ENCODE measurements at regions of chr1 and their contacts with region 1.

Region 1: DNA sequence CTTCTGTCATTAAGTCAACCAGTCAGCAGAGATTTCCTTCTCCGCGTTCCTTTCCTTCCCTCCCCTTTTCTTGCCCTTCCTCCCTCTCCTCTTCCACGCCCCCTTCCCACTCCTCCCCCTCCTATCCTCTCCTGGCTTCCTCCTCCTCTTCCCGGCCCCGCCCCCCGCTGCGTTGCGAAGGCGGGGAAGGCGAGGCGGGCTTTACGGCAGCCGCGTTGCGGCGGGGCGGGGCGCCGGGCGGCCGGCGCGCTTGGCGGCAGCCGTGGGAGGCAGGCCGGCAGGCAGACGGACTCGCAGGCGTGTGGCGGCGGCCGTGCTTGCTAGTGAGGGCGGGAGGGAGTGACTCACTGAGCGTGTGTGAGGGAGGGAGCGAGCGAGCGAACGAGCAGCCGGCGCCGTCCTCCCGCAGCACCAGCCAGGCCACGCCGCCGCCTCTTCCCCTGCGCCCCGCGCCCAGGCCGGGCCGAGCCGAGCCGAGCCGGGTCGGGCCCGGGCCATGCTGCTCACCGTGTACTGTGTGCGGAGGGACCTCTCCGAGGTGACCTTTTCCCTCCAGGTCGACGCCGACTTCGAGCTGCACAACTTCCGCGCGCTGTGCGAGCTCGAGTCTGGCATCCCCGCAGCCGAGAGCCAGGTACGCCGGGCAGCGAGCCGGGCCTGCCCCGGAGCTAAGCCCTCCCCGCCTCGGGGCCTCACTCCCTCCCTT is at the start of gene DDI2:
- DNase-seq: peak; percentile 97
- H3K4me3 ChIP-seq: peak within 1 kb of the TSS; percentile 83 to 95
- H3K27ac ChIP-seq: peak within 1 kb of the TSS; percentile 96 to 97
- H3K4me1 ChIP-seq: peaks cover 7% of the 10 kb centered on the region
- H3K27me3 ChIP-seq: no peaks in the 10 kb centered on the region
- CTCF ChIP-seq: peak in 2 of 4 experiments; percentile 7 to 22
- POLR2A ChIP-seq: peak; percentile 96
- total RNA-seq, gene DDI2: 47.5 to 58.4 TPM

Region 2: DNA sequence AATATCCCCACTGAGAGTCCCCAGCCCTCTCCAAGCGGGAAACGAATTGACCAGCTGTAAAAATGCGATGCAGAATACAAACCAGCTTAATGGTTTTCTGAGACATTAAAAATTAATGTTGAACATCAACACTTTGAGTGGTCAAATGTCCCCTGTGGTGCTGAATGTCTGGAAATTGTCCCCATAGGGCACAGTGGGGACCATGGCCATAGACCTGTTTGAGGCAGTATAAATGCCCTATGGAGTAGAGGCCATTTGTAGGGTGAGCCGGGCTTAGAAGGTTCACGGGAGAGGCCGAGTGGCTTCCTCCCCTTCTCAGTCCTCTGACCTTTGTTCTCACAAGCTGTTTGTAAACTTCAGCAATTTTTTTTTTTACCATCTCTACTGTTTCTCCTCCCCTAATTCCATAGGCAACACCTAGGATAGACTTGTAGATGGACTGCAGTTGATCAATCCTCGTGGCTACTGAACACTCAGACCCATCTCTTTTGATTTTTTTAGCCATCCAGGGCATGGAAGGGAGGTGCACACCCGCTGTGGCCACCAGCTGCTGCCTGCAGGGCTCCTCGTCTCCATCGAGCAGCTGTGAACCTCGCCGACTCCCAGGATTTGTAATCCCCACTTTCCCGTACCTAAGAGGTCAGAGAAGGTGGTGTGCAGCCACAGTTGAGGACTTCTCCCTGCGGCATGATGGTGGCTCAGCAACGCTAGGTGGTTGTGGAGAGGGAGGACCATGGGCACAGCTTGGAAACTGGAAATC is 977.9 kb before region 1 on chr1:
- intact Hi-C with region 1: no loop called
- DNase-seq: no peak
- H3K4me3 ChIP-seq: no peak overlapping the region
- H3K27ac ChIP-seq: no peak overlapping the region
- H3K4me1 ChIP-seq: no peaks in the 10 kb centered on the region
- H3K27me3 ChIP-seq: no peaks in the 10 kb centered on the region
- CTCF ChIP-seq: no peak
- POLR2A ChIP-seq: no peak

Region 3: DNA sequence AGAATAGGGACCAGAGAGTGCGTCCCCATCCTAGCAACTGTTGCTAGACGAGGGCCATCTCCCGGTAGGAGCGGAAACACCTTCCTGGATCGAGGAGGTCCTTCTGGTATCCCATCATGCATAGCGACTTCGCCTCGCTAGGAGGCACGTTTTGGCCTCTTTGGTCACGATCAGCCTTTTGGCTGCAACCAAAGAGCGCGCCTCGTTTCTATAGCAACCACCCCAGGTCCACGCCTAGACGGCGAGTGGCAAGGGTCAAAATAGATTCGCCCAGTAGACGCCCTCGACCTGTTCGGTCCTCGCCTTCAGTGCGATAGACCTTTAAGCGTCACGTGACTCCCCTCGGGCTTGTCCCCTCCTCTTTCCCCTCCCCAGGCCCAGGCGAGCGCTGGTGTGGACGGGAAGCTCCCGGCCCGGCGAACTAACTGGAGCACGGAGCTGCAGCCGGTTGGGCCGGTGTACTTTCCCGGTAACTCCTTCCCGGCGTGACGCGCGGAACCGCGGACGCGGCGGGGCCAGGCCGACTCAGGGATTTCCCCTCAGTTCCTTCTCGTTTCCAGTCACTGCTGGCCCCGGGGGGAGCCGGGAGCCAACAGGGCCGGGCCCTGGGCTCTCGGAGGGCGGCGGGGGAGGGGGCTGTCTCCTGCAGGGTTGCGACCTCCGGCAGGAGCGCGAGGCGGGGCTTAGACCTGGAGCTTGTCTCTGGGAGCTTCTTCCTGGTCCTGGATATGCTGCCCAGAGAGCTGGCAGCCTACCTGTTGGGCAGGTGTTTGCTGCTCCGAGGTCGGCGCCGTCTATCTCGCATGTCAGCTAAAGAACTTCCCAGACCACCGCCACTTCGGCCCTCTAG is 90.6 kb before region 1 on chr1 and contains the start of gene DNAJC16:
- intact Hi-C with region 1: loop called (anchors 1 kb)
- DNase-seq: peak; percentile 100
- H3K4me3 ChIP-seq: peak within 1 kb of the TSS; percentile 66 to 97
- H3K27ac ChIP-seq: peak within 1 kb of the TSS; percentile 98 to 99
- H3K4me1 ChIP-seq: no peaks in the 10 kb centered on the region
- H3K27me3 ChIP-seq: no peaks in the 10 kb centered on the region
- CTCF ChIP-seq: peak in 3 of 4 experiments; percentile 6 to 75 (median 46)
- POLR2A ChIP-seq: peak; percentile 78
- total RNA-seq, gene DNAJC16: 21.5 to 27.2 TPM

Region 4: GRCh38 chr1:15703562-15703961 is 86.2 kb after region 1 on chr1:
- intact Hi-C with region 1: loop called (anchors 5 kb)
- DNase-seq: peak; percentile 49
- H3K4me3 ChIP-seq: no peak overlapping the region
- H3K27ac ChIP-seq: peak overlapping the region; percentile 68 to 71
- H3K4me1 ChIP-seq: no peaks in the 10 kb centered on the region
- H3K27me3 ChIP-seq: no peaks in the 10 kb centered on the region
- CTCF ChIP-seq: no peak
- POLR2A ChIP-seq: peak; percentile 42